Sciatic nerve (tissue), 2 donors: ENCODE measurements at regions of chr12 and their contacts with region 1.

Region 1: DNA sequence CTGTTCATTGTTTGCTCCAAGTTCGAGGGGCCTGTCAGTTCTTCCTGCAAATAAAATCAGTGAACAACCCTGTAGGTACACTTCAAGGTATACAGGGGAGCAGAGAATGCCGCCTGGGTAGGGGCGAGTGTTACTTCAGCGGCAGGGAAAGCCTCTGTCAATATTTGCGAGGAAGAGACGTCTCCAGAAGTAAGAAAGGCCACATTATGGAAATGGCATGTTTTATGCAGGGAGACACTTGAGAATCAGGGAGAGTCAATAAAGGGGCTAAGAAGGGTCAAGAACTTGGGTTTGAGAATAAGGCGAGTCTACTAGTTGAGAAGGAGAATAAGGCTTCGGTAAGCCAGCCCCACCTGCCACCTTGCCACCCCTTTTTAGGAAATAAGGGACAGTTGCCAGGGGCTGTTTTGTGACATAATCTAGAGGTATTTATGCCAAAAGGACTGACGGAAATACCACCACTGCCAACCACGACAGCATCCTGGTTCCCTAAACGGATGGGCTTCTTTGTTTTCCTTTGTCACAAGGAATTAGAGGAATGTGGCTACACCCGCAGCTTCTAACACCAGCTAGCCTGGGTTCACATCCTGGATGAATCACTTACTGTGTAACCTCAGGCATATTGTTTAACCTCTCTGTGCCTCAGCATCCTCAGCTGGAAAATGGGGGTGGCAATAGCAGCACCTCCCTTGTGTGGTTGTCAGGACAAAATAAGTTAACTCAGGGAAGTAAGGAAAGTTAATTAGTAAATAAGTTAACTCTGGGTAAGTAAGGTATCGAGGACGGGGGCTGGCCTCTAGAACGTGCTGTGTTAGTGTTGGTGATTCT is 67.7 kb downstream of the EID3 start:
- DNase-seq: no peak
- ATAC-seq: no peak

Region 2: DNA sequence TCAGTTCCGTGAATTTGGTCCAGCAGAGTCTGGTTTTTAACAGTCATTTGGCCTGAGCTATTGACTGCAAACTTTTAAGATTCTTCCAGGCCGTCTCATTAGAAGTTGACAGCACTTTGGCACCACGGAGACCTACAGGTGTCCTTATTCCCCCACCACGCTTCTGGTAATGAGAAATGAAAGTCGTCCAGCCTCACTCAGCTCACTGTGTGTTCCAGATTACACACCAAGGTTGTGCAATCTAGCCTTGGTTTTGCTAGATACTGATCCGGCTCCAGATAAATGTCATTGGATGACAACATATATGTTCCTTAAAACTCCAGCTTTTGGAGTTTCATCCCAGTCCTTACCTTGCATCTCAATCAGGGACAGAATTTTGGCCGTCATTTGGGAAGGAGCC is 295.9 kb after region 1 on chr12:
- intact Hi-C with region 1: no loop called
- DNase-seq: no peak
- ATAC-seq: peak; percentile 33

Region 3: DNA sequence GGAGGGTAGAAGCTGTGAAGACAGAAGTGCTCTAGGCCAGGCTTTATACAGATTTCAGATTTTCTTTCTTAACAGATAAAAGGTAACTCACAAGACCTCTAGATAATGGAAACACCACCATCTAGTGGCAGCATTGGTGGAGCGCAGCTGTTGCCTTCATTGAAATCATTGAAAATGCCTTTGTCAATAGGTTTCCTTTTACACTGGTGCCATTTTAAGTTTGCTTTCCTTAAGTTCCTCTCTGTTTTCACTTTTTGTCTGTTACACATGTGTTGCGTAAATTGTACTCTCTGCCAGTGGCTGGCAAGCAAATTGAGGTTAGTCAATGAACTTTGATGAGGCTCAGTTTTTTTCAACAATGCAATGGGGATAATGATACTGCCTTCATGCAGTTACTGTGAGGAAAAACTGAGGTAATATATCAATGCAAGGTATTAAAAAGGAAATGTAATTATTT is 681.9 kb after region 1 on chr12:
- intact Hi-C with region 1: loop called (anchors 10 kb)
- DNase-seq: peak; percentile 86
- ATAC-seq: peak; percentile 93